ENCODE measurements at regions of chr4 and their contacts with region 1.

Region 1: GRCh38 chr4:182938205-182938645 is 21.0 kb upstream of the DCTD start:
- DNase-seq: no peak
- H3K4me3 ChIP-seq: no peak overlapping the region
- H3K27ac ChIP-seq: no peak overlapping the region
- H3K4me1 ChIP-seq: no peaks in the 10 kb centered on the region
- H3K27me3 ChIP-seq: peaks cover 14% of the 10 kb centered on the region
- CTCF ChIP-seq: peak; percentile 94 to 99 (median 98)

Region 2: GRCh38 chr4:182717788-182718583 is 220.2 kb before region 1 on chr4:
- dilution Hi-C with region 1: no loop called
- DNase-seq: no peak
- H3K4me3 ChIP-seq: no peak overlapping the region
- H3K27ac ChIP-seq: no peak overlapping the region
- H3K4me1 ChIP-seq: no peaks in the 10 kb centered on the region
- H3K27me3 ChIP-seq: no peaks in the 10 kb centered on the region
- CTCF ChIP-seq: no peak

Region 3: GRCh38 chr4:183074296-183074990 is 136.2 kb after region 1 on chr4:
- dilution Hi-C with region 1: no loop called
- DNase-seq: no peak
- H3K4me3 ChIP-seq: no peak overlapping the region
- H3K27ac ChIP-seq: no peak overlapping the region
- H3K4me1 ChIP-seq: peaks cover 3% of the 10 kb centered on the region
- H3K27me3 ChIP-seq: no peaks in the 10 kb centered on the region
- CTCF ChIP-seq: no peak

Region 4: DNA sequence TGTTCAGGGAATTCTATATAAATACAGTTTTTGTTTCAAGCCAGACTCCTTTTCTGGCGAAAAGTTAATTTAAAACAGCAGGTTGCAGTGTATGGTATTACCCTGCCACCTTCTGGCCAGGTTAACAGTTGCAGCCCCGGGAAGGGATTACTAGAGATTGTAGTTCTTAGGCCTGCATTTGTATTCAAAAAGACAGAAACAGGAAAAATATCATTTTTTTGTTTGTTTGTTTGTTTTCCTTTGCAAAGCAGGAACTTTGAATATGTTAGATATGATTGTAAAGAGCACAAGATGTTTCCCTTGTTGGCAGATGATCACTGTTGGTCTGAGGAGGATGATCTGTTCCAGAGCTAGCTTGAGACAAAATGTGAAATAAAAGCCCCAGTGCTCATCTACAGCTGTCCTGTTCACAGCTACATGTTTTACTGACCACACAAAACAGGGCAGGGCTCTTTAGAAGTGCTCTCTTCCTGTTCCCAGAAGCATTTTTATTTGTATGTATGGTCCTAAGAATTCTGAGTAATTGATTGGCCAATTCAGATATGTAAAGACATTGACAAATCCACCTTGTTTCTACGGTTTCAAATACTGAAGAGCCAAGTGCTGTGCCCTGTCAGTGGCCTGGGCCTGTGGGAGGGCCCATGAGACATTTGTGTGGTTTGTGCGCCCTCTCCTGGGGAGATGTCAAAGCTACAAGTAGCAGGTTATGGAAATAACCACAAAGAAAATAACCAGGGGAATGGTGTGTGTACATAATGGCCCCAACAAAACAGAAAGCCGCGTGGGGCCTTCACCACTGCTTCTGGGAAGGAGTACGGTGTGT is 323.9 kb after region 1 on chr4:
- dilution Hi-C with region 1: loop called (anchors 25 kb)
- DNase-seq: peak; percentile 33
- H3K4me3 ChIP-seq: no peak overlapping the region
- H3K27ac ChIP-seq: no peak overlapping the region
- H3K4me1 ChIP-seq: no peaks in the 10 kb centered on the region
- H3K27me3 ChIP-seq: no peaks in the 10 kb centered on the region
- CTCF ChIP-seq: peak; percentile 75 to 90 (median 82)

Measured in keratinocyte (primary cell).